Activated CD4-positive, alpha-beta T cell treated with anti-CD3 and anti-CD28 coated beads, Interleukin-2, amount 10 ng/mL, durations not matched to agents 24 days and 14 days (primary cell): ENCODE measurements at regions of chr10 and their contacts with region 1.

Region 1: GRCh38 chr10:24603333-24603732 is 120.4 kb downstream of the ARHGAP21 start:
- DNase-seq: no peak
- H3K4me3 Mint-ChIP-seq: peak overlapping the region; percentile 32
- H3K27ac Mint-ChIP-seq: peak overlapping the region; percentile 85
- H3K4me1 Mint-ChIP-seq: peaks cover 27% of the 10 kb centered on the region
- H3K27me3 Mint-ChIP-seq: no peaks in the 10 kb centered on the region

Region 2: DNA sequence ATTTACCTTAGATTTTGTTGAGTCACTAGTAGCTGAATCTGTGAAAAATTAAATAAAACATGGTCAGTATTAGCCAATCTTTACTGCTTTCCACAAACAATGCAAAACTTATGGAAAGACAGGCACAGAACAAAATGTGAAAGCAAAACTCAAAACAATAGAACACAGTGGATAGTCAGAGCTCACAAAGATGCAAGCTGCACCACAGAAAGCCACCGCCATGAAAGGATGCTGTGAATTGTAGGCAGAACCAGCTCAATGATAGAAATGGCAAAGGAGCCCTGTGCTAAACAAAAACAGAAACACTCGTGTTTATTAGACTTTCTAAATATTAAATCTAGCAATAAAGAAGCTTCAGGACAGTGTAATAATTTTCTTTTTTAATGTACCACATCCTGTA is 14.1 kb before region 1 on chr10:
- intact Hi-C with region 1: loop called (anchors 1 kb)
- DNase-seq: no peak
- H3K4me3 Mint-ChIP-seq: no peak overlapping the region
- H3K27ac Mint-ChIP-seq: no peak overlapping the region
- H3K4me1 Mint-ChIP-seq: peaks cover 4% of the 10 kb centered on the region
- H3K27me3 Mint-ChIP-seq: no peaks in the 10 kb centered on the region

Region 3: DNA sequence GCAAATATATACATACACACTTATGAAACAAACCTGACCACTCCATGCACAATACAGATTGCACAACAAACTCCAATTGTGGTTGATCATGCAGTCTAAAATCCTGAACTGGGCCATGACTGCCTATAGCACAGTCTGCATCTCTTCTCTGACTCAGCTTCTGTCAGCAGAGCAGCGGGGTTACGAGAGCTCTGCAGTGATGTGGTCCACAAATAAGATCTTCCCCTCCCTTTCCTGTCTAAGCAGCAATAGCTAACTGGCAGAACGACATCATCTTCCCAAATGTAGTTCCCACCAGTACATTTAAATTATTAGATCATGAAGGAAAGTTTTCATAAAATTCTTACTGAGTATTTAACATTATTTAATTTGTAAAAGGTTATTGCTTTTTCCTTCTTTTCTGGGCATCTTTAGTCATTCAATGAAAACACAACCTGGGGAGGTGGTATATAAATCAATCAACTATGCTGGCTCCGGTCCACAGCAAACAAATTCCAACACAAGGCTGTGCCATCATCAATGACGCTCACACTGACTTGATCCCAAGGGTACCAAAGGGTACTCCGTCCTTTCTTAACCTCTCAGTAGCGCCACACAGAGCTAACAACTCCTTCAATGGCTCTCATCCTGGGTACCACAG is 103.3 kb after region 1 on chr10:
- intact Hi-C with region 1: loop called (anchors 1 kb)
- DNase-seq: peak; percentile 78
- H3K4me3 Mint-ChIP-seq: no peak overlapping the region
- H3K27ac Mint-ChIP-seq: no peak overlapping the region
- H3K4me1 Mint-ChIP-seq: peaks cover 22% of the 10 kb centered on the region
- H3K27me3 Mint-ChIP-seq: no peaks in the 10 kb centered on the region

Region 4: DNA sequence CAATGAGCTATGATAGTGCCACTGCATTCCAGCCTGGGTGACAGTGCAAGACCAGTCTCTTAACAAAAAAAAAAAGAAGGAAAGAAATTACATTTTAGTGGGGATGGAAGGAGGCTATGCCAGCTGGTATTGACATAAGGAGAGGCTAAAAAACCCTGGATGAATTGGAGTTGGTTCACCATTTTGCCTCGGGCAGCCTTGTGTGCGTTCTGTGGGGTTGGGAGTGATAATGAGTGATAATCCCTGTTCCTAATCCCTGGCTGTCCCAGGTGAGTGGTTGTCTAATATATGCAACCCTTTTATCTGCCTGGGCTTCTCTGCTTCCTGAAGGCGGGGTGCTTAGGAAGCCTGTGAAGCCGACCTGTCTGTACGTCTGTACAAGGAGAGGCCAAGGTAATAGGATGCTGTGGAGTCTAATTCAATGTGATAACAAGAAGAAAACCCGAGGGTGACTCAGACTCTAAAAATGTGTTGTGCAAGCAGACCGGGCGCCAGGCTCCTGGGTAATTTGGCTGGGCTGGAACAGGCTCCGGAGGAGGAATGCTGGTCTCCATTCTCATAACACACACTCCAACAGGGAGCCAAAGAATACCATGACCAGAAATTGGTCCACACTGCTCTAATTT is 456.5 kb after region 1 on chr10:
- intact Hi-C with region 1: loop called (anchors 1 kb)
- DNase-seq: no peak
- H3K4me3 Mint-ChIP-seq: no peak overlapping the region
- H3K27ac Mint-ChIP-seq: no peak overlapping the region
- H3K4me1 Mint-ChIP-seq: peaks cover 22% of the 10 kb centered on the region
- H3K27me3 Mint-ChIP-seq: peaks cover 3% of the 10 kb centered on the region